GM10248 (cell line): ENCODE measurements at regions of chr11 and their contacts with region 1.

Region 1: DNA sequence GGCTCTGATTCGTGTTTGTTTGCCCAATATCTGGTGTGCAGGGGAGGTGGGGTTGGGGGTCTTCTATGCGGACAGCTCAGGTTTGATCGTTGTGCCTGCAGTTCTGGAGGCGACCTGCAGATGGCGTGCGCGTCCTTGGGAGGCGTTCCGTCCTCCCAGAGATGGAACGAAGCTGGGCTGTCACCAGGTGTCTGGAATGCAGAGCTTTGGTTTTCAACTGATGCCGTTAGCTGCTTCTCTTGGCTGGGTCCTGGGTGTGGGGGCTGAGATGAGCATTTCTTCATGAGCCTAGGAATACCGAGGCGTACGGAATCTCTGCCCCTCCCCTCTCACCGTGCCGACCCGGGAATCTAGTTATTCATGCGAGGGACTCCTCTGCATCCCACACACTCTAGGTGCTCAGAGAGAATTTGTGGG is 98.6 kb downstream of the CEP164 start:
- DNase-seq: peak; percentile 85
- CTCF ChIP-seq: peak; percentile 95

Region 2: GRCh38 chr11:117438371-117439000 is 12.2 kb after region 1 on chr11:
- CTCF ChIA-PET with region 1: interaction called, 25 read pairs
- POLR2A ChIA-PET with region 1: no interaction called
- DNase-seq: peak; percentile 67
- CTCF ChIP-seq: no peak

Region 3: DNA sequence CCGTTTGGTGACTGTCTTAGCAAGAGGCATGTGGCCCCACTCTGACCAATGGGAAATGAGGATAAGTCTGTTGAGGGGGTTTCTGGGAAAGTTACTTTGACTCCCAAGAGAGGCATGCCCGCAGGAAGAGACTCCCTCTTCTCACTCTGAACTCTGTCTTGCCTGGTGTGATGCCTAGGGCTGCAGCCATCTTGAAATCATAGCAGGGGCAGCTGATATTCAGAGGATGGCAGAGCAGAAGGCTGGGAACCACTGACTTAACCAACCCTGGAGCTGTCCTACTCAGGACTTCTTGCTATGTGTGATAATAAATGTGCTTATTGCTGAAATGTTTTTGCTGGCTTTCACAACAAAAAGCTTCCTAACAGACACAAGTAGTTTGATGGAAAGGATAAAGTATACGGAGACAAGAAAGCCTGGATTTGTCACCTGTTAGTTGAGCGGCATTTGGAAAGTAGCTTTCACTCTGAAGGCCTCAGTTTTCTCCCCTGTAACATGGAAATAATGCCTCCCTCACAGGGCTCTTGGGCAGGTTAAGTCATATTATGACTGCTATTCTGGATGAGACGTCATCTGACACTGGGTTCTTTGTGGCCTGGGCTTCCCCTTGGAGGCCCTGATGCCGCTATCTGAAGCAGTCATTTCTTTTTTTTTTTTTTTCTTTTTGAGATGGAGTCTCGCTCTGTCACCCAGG is 29.9 kb after region 1 on chr11:
- CTCF ChIA-PET with region 1: interaction called, 33 read pairs
- POLR2A ChIA-PET with region 1: no interaction called
- DNase-seq: peak; percentile 76
- CTCF ChIP-seq: no peak

Region 4: DNA sequence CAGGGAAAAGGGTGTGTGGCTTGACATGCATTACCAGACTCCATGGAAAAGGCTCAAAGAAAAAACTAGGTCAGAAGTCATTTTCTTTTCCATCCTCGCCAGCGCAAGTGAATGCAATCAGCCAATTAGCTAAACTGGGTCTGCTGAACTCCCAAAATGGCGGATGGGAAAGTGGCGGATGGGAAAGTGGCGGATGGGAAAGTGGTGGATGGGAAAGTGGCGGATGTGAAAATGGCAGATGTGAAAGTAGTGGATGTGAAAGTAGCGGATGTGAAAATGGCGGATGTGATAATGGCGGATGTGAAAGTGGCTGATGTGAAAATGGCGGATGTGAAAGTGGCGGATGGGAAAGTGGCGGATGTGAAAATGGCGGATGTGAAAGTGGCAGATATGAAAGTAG is 59.8 kb after region 1 on chr11:
- CTCF ChIA-PET with region 1: interaction called, 32 read pairs
- POLR2A ChIA-PET with region 1: no interaction called
- DNase-seq: no peak
- CTCF ChIP-seq: no peak

Region 5: GRCh38 chr11:117690484-117691217 is 264.4 kb after region 1 on chr11:
- CTCF ChIA-PET with region 1: interaction called, 10 read pairs
- POLR2A ChIA-PET with region 1: no interaction called
- DNase-seq: peak; percentile 45
- CTCF ChIP-seq: no peak

Region 6: DNA sequence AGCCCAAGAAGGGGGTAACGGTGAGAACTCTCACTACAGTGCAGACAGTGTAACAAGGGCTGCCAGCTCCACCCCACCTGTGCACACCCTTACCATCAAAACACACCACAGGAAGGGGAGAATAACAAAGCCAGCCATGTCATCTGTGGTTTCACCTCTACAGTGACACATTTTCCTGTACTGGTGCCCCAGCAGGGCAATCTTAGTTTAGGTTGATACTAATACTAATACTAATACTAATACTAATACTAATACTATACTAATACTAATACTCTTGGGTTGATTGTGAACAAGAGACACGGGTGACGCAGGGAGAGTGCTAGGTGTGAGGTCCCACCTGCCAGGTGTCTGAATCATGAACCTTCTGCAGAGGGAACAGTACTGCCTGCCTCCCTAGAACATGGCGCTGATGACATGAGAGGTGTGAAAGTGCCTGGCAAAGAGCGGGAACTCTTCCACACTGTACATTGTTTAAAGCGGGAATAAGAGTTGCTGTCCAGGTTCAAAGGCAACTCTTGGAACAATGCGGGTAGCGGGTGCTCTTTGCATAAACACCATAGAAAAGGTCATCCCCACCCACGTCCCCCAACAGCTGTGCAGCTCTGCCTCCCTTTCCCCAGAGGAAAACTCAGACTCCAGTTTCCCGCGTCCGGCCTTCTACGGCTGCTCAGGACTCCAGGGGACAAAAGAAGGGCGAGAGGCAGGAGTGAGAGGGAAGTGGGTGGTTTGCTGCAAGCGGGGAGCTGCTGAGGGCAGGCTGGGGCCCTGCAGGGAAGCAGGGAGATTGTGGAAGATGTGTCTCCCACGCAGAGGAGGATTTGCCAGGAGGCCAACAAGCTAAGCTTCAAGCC is 625.6 kb after region 1 on chr11:
- CTCF ChIA-PET with region 1: interaction called, 16 read pairs
- POLR2A ChIA-PET with region 1: no interaction called
- DNase-seq: no peak
- CTCF ChIP-seq: no peak